Activated CD8-positive, alpha-beta T cell treated with anti-CD3 and anti-CD28 coated beads, Interleukin-2, amount 10 ng/mL, durations not matched to agents 7 days and 5 days (primary cell): ENCODE measurements at regions of chrX and their contacts with region 1.

Region 1: DNA sequence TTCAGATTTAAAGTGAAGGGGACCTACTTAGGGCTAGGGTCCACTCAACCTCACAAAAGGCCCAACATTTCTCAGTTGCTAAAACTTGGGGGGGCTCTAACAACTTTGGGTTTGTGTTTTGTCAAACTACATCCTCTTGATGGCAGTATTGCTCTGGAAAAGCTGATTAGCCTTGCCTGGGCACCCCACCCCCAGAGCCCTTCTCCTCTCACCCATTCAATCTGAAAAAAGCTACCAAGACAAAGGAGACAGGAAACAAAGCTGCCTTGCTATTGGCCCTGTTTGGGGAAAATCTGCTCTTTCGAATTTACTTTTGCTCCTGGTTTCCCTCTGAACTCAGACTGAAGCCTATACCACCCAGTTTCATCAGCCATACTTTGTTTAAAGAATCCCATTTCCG is 195.2 kb upstream of the STK26 start:
- DNase-seq: peak; percentile 53
- ATAC-seq: peak; percentile 65
- H3K4me3 Mint-ChIP-seq: peak overlapping the region; percentile 51
- H3K27ac Mint-ChIP-seq: peak overlapping the region; percentile 31
- H3K4me1 Mint-ChIP-seq: peaks cover 28% of the 10 kb centered on the region
- H3K27me3 Mint-ChIP-seq: no peaks in the 10 kb centered on the region

Region 2: GRCh38 chrX:131792789-131793462 is 35.0 kb before region 1 on chrX:
- CTCF ChIA-PET with region 1: no interaction called
- POLR2A ChIA-PET with region 1: no interaction called
- DNase-seq: no peak
- ATAC-seq: no peak
- H3K4me3 Mint-ChIP-seq: no peak overlapping the region
- H3K27ac Mint-ChIP-seq: no peak overlapping the region
- H3K4me1 Mint-ChIP-seq: no peaks in the 10 kb centered on the region
- H3K27me3 Mint-ChIP-seq: no peaks in the 10 kb centered on the region

Region 3: DNA sequence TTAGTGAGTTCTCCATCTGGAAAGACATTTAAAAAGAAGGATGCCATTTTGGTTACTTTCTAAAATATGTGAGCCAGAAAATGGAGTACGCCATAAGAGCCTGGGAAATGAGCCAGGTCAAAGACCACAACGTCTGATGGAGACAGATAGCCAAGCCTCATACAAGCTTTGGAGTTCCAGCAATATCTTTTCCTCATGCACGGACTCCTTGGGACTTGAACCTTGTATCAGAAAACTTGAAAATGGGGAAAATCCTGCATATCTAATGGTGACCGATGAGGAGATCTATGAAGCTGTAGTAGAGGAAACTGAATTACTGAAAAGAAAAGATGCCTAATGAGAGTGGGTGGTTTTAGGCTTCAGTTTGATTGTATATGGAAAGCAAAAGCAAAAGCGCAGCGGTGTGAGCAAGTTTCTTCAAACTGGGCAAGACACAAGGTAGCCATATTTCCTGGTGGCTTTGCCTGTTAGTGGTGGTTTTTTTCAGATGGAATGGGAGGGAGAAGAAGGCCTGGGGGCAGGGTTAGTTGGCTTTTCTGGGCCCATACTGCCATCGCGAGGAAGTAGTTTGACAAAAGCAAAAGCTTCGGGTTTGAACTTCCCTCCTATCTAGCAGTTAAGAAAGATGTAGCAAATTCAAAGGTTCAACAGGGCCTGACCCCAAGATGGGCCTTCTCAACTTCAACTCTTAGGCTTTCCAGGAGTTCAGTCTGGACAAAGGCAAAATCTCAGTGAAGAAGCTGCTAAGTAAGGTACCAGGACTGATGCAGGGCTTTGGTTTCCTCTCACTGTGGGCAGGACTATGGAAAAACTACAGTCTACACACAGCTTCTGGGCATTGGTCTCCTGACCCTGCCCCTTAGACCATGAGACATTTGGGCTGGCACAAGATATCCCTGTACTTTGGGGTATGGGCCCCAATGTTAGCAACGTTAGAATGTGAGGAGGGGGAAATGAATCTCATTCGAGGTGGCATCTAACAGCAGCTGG is 14.8 kb before region 1 on chrX:
- CTCF ChIA-PET with region 1: interaction called, 11 read pairs
- POLR2A ChIA-PET with region 1: no interaction called
- DNase-seq: peak; percentile 79
- ATAC-seq: peak; percentile 91
- H3K4me3 Mint-ChIP-seq: peak overlapping the region; percentile 71
- H3K27ac Mint-ChIP-seq: peak overlapping the region; percentile 96
- H3K4me1 Mint-ChIP-seq: peaks cover 33% of the 10 kb centered on the region
- H3K27me3 Mint-ChIP-seq: no peaks in the 10 kb centered on the region

Region 4: GRCh38 chrX:131841496-131842410 is 13.8 kb after region 1 on chrX:
- CTCF ChIA-PET with region 1: interaction called, 13 read pairs
- POLR2A ChIA-PET with region 1: no interaction called
- DNase-seq: peak; percentile 40
- ATAC-seq: peak; percentile 70
- H3K4me3 Mint-ChIP-seq: no peak overlapping the region
- H3K27ac Mint-ChIP-seq: peak overlapping the region; percentile 49
- H3K4me1 Mint-ChIP-seq: no peaks in the 10 kb centered on the region
- H3K27me3 Mint-ChIP-seq: no peaks in the 10 kb centered on the region